ENCODE measurements at regions of chr17 and their contacts with region 1.

Region 1: DNA sequence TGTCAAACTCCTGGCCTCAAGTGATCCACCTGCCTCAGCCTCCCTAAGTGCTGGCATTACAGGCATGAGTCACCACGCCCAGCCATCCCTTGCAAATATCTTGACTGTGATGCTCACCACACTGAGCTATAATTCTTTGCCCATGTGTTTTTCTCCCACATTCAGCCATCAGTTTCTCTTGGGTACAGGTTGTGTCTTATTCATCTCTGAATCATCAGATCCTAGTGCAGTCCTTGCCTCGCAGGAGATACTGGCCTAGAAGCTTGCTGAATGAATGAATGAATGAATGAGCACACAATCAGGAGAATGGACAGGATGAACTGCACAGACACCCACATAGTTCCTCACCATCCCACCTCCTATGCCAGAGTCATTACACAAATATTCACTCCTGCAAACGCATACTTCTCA is 24.4 kb upstream of the ETV4 start:
- H3K4me3 ChIP-seq: no peak overlapping the region
- H3K27ac ChIP-seq: no peak overlapping the region
- H3K4me1 ChIP-seq: peaks cover 14% of the 10 kb centered on the region
- CTCF ChIP-seq: no peak

Region 2: DNA sequence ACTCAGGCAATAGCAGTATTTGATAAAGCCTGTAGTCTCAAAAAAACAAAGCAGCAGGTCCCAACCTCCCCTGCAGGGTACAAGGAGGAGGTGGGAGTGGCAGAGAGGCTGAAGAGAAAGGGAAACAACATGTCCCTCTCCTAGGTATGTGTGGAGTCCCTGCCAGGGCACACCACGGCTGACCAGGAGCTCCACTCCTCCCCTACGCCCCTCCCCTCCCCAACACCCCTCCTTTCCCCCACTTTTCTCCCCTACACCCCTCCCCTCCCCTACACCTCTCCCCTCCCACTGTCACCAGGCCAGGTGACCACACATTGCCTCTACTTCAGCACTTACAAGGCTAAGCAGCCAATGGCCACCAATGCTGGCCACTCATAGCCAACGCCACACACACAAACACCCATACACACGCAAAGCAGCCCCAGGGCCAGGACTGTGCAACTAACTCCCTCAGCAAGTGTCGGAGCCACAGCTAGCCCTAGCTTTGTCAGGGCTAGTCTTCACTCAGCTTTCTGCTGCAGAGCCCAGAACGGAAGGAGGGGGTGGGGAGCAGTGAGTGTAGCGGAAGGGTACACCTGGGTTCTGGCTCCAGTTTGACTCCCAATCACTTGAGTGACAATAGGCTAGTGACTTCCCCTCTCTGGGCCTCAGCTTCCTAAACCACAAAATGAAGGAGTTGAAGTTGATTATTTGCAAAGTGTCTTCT is 1155.7 kb before region 1 on chr17:
- CTCF ChIA-PET with region 1: no interaction called
- POLR2A ChIA-PET with region 1: interaction called, 11 read pairs
- H3K4me3 ChIP-seq: no peak overlapping the region
- H3K27ac ChIP-seq: no peak overlapping the region
- H3K4me1 ChIP-seq: 0 out of 2 replicates have a peak, but pooled peaks cover 3% of the 10 kb centered on the region
- CTCF ChIP-seq: no peak

Measured in HEK293 (cell line).